Cardiac septum (tissue), 1 donor: ENCODE measurements at regions of chr6 and their contacts with region 1.

Region 1: DNA sequence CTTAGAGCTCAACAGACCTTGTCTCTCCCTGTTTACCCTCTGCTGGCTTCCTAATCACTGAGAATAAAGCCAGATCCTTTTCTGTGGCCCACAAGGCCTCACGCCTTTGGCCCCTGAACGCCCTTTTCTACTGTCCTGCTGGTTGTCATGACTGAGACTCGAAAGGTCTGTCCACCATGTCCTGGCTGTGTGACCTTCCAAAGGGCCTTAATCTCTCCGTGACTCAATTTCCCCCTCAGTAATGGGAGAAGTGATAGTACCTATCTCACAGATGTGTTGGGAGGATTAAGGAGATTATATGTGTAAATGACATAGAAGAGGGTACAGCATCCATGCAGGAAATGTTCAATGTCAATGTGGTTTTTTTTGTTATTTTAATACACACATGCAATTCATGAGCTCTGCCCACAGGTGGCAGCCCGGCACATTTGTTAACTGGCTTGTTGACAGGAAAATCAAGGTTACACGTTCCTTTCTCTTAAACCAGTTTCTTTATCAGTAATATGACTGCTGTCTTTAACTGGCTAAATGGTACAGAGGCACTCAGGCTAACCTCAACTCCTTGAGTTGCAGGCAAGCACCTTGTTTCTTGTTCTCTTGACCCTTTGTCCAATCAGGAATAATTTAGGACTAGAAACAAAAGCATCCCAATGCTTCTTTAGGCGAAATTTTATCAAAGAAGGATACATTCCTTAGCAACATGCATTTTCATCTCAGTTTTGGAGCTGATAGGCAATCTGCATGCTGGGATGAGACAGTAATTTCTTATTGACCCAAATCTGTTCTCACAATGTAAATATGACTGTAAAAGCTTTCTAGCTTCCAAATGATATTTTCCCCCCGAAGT is 16.6 kb downstream of the SLC22A1 start:
- DNase-seq: peak; percentile 64

Region 2: DNA sequence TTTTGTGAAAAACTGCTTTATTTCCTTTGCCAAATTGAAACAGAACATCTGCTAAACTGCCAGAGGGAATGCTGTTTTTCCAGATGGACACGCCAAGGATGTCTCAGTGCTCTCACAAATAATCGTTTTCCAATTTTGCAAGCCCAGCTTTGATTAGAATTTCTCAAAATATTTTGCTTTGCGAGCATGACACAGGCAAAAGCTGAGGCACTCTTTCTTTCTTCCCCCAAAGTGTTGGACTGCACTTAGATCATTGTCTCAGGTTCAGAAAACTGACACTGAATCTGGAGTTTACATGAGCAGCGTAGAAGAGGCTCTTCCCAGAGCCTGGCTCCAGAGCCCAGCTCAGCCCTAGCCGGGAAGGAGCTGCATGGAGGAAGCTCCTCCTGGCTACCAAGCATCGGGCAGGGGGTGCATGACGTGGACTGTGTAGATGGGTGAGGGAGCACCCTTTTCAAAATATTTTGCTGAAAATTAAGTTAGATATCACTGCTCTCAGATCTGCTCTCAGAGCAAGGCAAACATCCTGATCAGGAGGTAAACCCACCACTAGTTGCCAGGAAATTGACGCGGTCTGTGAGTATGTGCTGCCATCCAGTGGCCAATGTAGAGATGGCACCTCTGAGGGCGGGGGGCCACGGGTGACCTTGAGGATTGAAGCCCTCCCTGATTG is 317.5 kb after region 1 on chr6:
- intact Hi-C with region 1: loop called (anchors 1 kb)
- DNase-seq: no peak

Region 3: GRCh38 chr6:160477901-160478300 is 339.7 kb after region 1 on chr6:
- intact Hi-C with region 1: no loop called
- DNase-seq: no peak